Activated naive CD8-positive, alpha-beta T cell treated with anti-CD3 and anti-CD28 coated beads, Interleukin-2, amount 10 ng/mL, durations not matched to agents 7 days and 5 days (primary cell): ENCODE measurements at regions of chr17 and their contacts with region 1.

Region 1: GRCh38 chr17:77127735-77128361 is 12.9 kb upstream of the SEC14L1 start:
- DNase-seq: peak; percentile 73
- ATAC-seq: peak; percentile 95
- H3K4me3 Mint-ChIP-seq: peak overlapping the region; percentile 76
- H3K27ac Mint-ChIP-seq: peak overlapping the region; percentile 93
- H3K4me1 Mint-ChIP-seq: peaks cover 37% of the 10 kb centered on the region
- H3K27me3 Mint-ChIP-seq: no peaks in the 10 kb centered on the region

Region 2: GRCh38 chr17:77109764-77110359 is 18.0 kb before region 1 on chr17:
- POLR2A ChIA-PET with region 1: interaction called, 27 read pairs
- DNase-seq: no peak
- ATAC-seq: no peak
- H3K4me3 Mint-ChIP-seq: peak overlapping the region; percentile 72
- H3K27ac Mint-ChIP-seq: peak overlapping the region; percentile 83
- H3K4me1 Mint-ChIP-seq: peaks cover 46% of the 10 kb centered on the region
- H3K27me3 Mint-ChIP-seq: no peaks in the 10 kb centered on the region

Region 3: DNA sequence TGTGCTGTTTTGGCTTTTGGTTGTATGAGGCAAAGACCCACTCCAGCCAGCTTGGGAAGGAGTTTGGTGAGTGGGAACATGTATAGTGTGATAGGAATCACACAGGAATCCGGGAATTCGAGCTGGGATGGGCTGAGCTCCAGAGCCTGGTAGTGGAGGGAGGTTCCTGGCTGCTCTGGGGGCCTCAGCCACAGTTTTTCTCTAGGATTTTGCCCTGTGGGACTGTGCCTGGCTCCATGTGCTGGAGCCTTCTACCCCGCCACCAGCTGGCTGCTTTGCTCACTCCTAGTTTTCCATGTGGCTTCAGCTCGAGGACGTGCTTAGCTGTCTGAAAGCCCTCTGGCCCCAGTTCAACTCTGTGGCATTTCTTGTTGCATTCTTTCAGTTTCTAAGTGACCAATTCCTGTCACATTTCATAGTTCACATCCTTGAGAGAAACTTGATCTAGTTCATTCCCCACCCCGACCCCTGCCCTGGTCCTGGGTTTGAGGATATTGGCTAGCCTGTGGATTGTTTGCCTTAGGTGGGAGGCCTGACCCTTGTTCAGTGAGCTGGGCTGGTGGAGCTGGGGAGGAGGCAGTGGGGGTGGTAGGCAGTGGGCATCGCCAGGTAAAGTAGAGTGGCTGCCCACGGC is 17.9 kb after region 1 on chr17:
- POLR2A ChIA-PET with region 1: interaction called, 100 read pairs
- DNase-seq: no peak
- ATAC-seq: peak; percentile 20
- H3K4me3 Mint-ChIP-seq: peak overlapping the region; percentile 71
- H3K27ac Mint-ChIP-seq: peak overlapping the region; percentile 84
- H3K4me1 Mint-ChIP-seq: peaks cover 68% of the 10 kb centered on the region
- H3K27me3 Mint-ChIP-seq: no peaks in the 10 kb centered on the region

Region 4: DNA sequence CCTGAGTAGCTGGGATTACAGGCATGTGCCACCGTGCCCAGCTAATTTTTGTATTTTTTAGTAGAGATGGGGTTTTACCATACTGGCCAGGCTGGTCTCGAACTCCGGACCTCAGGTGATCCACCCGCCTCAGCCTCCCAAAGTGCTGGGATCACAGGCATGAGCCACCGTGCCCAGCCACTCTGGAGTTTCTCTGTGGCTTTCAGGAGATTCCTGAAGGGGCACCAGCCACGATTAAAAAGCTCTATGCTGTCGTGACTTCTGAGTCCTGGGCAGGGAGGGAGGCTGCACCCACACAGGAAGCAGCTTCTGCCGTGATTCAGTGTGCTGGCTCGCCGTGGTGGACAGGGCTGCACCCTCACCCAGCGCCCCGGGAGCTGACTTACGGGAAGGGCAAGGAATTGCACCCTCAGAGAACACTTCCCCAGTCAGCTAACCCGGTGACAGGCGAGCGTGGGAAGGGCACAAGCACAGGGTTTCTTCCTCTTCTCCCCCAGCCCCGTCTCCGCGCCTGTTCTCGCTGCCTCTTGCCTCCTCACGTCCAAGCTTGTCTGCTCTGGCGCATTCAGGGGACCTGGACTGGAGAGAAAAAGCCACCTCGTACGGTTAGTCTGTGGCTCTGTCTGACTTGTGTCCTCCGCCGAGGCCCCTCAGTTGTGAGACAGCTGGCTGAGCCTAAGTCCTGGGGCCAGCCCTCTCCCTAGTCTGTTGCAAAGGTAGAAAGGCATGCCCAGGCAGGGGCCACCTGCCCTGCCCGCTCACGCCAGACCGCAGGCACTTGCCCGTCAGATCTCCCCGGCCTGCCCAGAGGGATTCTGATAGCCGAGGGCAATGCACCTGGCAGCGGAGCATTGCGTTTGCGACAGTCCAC is 157.9 kb after region 1 on chr17:
- POLR2A ChIA-PET with region 1: no interaction called
- DNase-seq: no peak
- ATAC-seq: no peak
- H3K4me3 Mint-ChIP-seq: no peak overlapping the region
- H3K27ac Mint-ChIP-seq: no peak overlapping the region
- H3K4me1 Mint-ChIP-seq: peaks cover 8% of the 10 kb centered on the region
- H3K27me3 Mint-ChIP-seq: peaks cover 26% of the 10 kb centered on the region